ENCODE measurements at regions of chr4 and their contacts with region 1.

Region 1: DNA sequence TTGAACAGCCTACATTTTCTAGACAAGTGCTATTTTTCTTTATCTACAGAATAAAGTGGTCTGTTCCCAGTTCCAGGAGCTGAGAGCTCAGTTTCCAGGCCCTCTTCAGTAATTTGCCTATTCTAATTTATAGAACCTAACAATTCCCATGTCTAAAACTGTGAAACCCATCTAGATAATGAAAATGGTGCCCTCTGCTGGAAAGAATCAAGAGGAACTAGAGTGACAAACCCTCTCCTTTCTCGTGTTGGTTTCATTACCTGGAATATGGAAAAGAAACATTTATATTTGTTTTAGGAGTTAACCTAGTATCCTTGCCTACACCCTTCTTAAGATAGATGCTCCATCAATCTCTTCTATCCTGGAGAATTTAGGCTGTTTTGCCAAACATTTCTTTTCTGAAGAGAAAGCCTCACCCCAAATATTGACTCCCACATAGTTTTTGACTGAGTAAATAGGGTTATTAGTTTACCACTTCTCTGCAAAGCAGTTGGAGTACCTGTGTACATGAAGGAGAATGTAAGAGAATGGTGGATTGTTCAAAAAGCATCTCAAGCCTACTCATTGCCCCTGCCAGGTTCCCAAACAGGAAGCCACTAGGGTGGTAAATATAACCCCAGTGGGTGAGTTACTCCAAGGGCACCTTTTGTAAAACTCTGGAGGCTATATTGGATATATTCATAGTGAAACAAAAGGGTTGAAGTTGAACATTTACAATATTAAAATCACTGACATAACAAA is 121.6 kb downstream of the RASL11B start:
- DNase-seq: peak; percentile 42
- H3K4me3 ChIP-seq: no peak overlapping the region
- H3K27ac ChIP-seq: no peak overlapping the region
- H3K4me1 ChIP-seq: peaks cover 10% of the 10 kb centered on the region
- H3K27me3 ChIP-seq: no peaks in the 10 kb centered on the region
- CTCF ChIP-seq: peak; percentile 58 to 64

Region 2: GRCh38 chr4:52103319-52103718 is 880.4 kb before region 1 on chr4:
- CTCF ChIA-PET with region 1: interaction called, 4 read pairs
- dilution Hi-C with region 1: no loop called
- in situ Hi-C with region 1: loop called in 1 of 2 experiments (anchors 25 kb)
- intact Hi-C with region 1: loop called (anchors 1 kb)
- DNase-seq: peak; percentile 40
- H3K4me3 ChIP-seq: no peak overlapping the region
- H3K27ac ChIP-seq: no peak overlapping the region
- H3K4me1 ChIP-seq: peaks cover 25% of the 10 kb centered on the region
- H3K27me3 ChIP-seq: no peaks in the 10 kb centered on the region
- CTCF ChIP-seq: peak; percentile 25 to 54

Region 3: DNA sequence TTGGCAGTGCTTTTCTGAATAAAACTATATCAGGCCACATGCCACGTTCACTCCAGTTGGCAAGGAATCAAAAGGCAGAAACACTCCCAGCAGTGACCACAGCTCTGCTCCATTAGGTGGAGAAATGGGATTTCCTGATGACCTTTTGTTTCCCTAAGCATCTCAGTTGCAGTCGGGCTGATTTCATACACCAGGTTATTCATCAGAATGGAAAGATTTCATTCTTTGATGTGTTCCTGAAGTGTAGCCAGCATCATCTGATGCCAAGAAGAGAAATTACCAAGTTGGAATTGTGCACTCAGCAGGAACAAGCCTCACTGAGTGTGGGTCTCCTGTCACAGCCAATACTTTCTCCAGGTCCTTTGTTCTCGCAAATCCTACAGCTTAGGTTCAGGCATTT is 738.9 kb before region 1 on chr4:
- CTCF ChIA-PET with region 1: no interaction called
- dilution Hi-C with region 1: no loop called
- in situ Hi-C with region 1: no loop called
- intact Hi-C with region 1: loop called (anchors 5 kb)
- DNase-seq: no peak
- H3K4me3 ChIP-seq: no peak overlapping the region
- H3K27ac ChIP-seq: no peak overlapping the region
- H3K4me1 ChIP-seq: peaks cover 12% of the 10 kb centered on the region
- H3K27me3 ChIP-seq: no peaks in the 10 kb centered on the region
- CTCF ChIP-seq: no peak

Region 4: DNA sequence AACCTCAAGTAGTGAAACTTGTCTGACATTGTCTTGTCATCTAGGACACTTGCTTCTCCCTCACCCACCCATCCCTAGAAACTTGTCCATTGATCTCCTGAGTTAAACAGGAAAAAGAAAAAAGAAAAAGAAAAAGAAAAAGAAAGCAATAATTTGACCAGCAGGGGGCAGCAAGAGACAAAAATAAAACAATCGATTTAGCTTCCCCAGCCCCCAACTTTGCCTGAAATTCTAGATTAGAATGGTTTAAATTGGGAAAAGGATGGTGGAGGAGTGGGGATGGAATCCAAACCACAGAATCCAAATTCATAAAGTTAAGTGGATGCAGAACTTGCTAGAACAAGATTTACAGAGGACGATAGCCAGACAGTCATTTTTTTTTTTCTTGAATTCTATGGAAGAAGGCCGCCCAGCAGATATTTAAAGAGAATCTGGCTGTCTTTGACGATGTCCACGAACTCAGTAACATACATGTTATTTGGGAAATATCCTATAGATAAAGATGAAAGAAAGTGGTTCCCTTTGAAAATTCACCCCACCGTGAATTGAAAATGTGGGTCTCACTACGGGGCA is 607.5 kb before region 1 on chr4:
- CTCF ChIA-PET with region 1: interaction called, 6 read pairs
- dilution Hi-C with region 1: no loop called
- in situ Hi-C with region 1: loop called (anchors 5 to 10 kb)
- intact Hi-C with region 1: loop called (anchors 1 kb)
- DNase-seq: peak; percentile 29
- H3K4me3 ChIP-seq: no peak overlapping the region
- H3K27ac ChIP-seq: no peak overlapping the region
- H3K4me1 ChIP-seq: no peaks in the 10 kb centered on the region
- H3K27me3 ChIP-seq: no peaks in the 10 kb centered on the region
- CTCF ChIP-seq: peak; percentile 37 to 55

Region 5: GRCh38 chr4:52712172-52712990 is 271.4 kb before region 1 on chr4:
- CTCF ChIA-PET with region 1: no interaction called
- dilution Hi-C with region 1: no loop called
- in situ Hi-C with region 1: no loop called
- intact Hi-C with region 1: loop called (anchors 2 kb)
- DNase-seq: peak; percentile 97
- H3K4me3 ChIP-seq: peak overlapping the region; percentile 80 to 85 (median 82)
- H3K27ac ChIP-seq: peak overlapping the region; percentile 84
- H3K4me1 ChIP-seq: peaks cover 31% of the 10 kb centered on the region
- H3K27me3 ChIP-seq: no peaks in the 10 kb centered on the region
- CTCF ChIP-seq: no peak

Region 6: DNA sequence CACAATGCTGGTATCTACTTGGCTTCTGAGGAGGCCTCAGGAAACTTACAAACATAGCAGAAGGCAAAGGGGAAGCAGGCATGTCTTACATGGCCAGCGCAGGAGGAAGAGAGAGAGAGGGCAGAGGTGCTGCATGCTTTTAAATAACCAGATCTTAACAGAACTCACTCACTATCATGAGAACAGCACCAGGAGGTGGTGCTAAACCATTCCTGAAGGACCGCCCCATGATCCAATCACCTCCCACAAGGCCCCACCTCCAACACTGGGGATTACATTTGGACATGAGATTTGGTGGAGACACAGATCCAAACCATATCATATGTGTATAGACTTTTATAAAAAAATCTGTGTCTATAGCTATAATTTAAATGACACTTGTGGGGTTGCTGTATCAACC is 183.9 kb before region 1 on chr4:
- CTCF ChIA-PET with region 1: no interaction called
- dilution Hi-C with region 1: no loop called
- in situ Hi-C with region 1: no loop called
- intact Hi-C with region 1: loop called (anchors 1 kb)
- DNase-seq: no peak
- H3K4me3 ChIP-seq: no peak overlapping the region
- H3K27ac ChIP-seq: no peak overlapping the region
- H3K4me1 ChIP-seq: no peaks in the 10 kb centered on the region
- H3K27me3 ChIP-seq: no peaks in the 10 kb centered on the region
- CTCF ChIP-seq: peak in 1 of 2 donors; percentile 7

Region 7: DNA sequence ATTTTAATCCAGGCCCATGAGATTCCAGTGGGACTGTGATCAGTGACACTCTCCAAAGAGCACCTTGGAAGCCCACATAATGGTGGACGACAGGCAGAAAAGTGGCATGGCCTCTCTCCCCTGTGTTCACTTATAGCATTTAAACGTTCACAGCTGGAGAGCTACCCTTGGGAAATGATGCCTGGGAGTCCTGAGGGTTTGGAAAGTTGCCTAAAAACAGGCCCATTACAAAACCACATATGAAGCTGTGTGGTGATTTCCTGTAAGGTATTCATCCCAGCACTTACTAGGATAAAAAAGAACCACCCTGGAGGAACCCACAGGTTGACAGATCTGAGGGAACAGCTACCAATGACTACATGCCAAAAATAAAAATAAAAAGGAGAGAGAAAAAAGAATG is 71.5 kb after region 1 on chr4:
- CTCF ChIA-PET with region 1: no interaction called
- dilution Hi-C with region 1: no loop called
- in situ Hi-C with region 1: no loop called
- intact Hi-C with region 1: no loop called
- DNase-seq: peak; percentile 65
- H3K4me3 ChIP-seq: no peak overlapping the region
- H3K27ac ChIP-seq: no peak overlapping the region
- H3K4me1 ChIP-seq: no peaks in the 10 kb centered on the region
- H3K27me3 ChIP-seq: no peaks in the 10 kb centered on the region
- CTCF ChIP-seq: no peak

Measured in mammary epithelial cell (primary cell).